ENCODE measurements at regions of chr2 and their contacts with region 1.

Region 1: DNA sequence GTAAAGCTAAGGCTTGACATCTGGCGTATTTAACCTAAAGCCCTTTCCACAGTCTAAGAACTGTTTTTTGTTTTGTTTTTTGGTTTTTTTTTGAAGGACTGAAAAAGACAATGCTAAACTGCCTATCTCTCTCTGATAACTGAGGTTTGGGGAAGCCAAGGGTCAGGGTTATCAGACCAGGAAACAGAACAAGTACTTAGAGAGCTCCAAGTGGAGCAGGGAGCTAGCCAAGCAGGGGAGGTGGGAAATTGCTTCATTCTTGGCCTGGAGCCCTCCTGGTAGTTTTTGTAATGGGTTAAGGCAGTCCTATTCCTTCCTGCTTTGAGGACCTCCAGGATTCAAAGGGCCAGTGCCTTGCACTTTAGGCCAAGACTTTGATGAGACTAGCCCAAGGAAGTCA is 154.3 kb upstream of the LTBP1 start:
- DNase-seq: no peak

Region 2: GRCh38 chr2:32820088-32820487 is 27.7 kb after region 1 on chr2:
- intact Hi-C with region 1: no loop called
- DNase-seq: no peak

Region 3: DNA sequence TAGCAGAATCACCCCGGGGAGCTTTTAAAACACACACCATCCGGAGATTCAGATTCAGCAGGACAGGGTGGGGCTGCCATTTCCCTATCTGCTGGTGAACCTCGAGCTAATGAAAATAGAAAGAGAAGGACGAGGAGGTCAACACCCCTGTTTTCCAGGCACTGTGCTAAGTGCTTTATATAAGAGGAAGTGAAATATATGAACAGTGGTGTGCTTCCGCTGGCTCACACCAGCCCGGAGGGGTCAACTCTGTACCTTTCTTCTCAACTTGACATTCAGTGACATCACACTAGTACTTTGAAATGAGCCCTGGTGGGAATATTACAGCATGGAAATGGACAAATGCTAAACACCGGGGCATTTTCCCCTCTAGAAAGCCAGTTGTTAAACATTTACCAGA is 46.0 kb after region 1 on chr2:
- intact Hi-C with region 1: loop called (anchors 5 kb)
- DNase-seq: no peak